Esophagus squamous epithelium (tissue), 5 donors: ENCODE measurements at regions of chr3 and their contacts with region 1.

Region 1: GRCh38 chr3:128584412-128585020 is 66.1 kb downstream of the RPN1 start:
- DNase-seq: no peak
- H3K4me3 ChIP-seq: no peak overlapping the region
- H3K27ac ChIP-seq: no peak overlapping the region
- H3K4me1 ChIP-seq: peaks cover 0 to 6% (median 0%) of the 10 kb centered on the region in 3 donors
- H3K27me3 ChIP-seq: peaks cover 0 to 19% (median 0%) of the 10 kb centered on the region in 4 donors
- CTCF ChIP-seq: peak in 5 of 6 experiments; percentile 47 to 84 (median 60)
- POLR2A ChIP-seq: no peak

Region 2: GRCh38 chr3:128438488-128439072 is 145.9 kb before region 1 on chr3:
- intact Hi-C with region 1: loop called (anchors 10 kb)
- DNase-seq: no peak
- H3K4me3 ChIP-seq: no peak overlapping the region
- H3K27ac ChIP-seq: no peak overlapping the region
- H3K4me1 ChIP-seq: no peaks in the 10 kb centered on the region
- H3K27me3 ChIP-seq: peaks cover 0 to 59% (median 0%) of the 10 kb centered on the region in 4 donors
- CTCF ChIP-seq: peak in 1 of 6 experiments; percentile 22
- POLR2A ChIP-seq: no peak